ENCODE measurements at regions of chr6 and their contacts with region 1.

Region 1: GRCh38 chr6:37698261-37699137 is 816 bp upstream of the MDGA1 start:
- DNase-seq: peak in 3 of 10 donors; percentile 41 to 82 (median 44)

Region 2: GRCh38 chr6:37607944-37608343 is 90.6 kb before region 1 on chr6:
- intact Hi-C with region 1: loop called (anchors 2 kb)
- DNase-seq: no peak

Measured in posterior cingulate gyrus (tissue), 11 donors.